ENCODE measurements at regions of chr10 and their contacts with region 1.

Region 1: GRCh38 chr10:17454161-17455014 is at the start of gene ST8SIA6:
- DNase-seq: peak; percentile 63
- H3K4me3 Mint-ChIP-seq: peak within 1 kb of the TSS; percentile 81
- H3K27ac Mint-ChIP-seq: peak within 1 kb of the TSS; percentile 33
- H3K4me1 Mint-ChIP-seq: no peaks in the 10 kb centered on the region
- H3K27me3 Mint-ChIP-seq: peaks cover 37% of the 10 kb centered on the region
- CTCF ChIP-seq: no peak
- total RNA-seq, gene ST8SIA6: 0.14 TPM in 1 of 2 replicates, not detected in the other

Region 2: DNA sequence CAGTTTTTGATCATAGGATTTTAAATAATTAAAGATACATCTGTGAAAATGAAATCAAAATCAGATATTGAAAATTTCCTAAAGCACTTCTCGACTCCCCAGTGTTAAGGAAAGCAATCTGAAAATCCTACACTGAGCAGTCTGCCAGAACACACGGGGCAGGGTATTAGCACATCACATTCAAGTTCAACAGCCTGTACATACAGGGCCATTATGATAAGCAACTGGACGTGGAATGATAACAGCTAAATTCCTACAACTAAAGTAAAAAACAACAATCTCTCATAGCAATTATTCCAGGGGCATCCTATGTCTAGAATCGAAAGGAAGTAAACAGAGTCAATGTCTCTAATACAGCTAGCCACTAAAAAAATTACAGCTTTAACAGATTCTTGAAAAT is 284.6 kb before region 1 on chr10:
- CTCF ChIA-PET with region 1: no interaction called
- intact Hi-C with region 1: no loop called
- DNase-seq: no peak
- H3K4me3 Mint-ChIP-seq: no peak overlapping the region
- H3K27ac Mint-ChIP-seq: no peak overlapping the region
- H3K4me1 Mint-ChIP-seq: no peaks in the 10 kb centered on the region
- H3K27me3 Mint-ChIP-seq: no peaks in the 10 kb centered on the region
- CTCF ChIP-seq: no peak

Region 3: GRCh38 chr10:17586821-17587234 is 132.4 kb after region 1 on chr10:
- CTCF ChIA-PET with region 1: no interaction called
- intact Hi-C with region 1: loop called (anchors 10 kb)
- DNase-seq: no peak
- H3K4me3 Mint-ChIP-seq: no peak overlapping the region
- H3K27ac Mint-ChIP-seq: no peak overlapping the region
- H3K4me1 Mint-ChIP-seq: peaks cover 7% of the 10 kb centered on the region
- H3K27me3 Mint-ChIP-seq: no peaks in the 10 kb centered on the region
- CTCF ChIP-seq: no peak